PC-3 (cell line): ENCODE measurements at regions of chr4 and their contacts with region 1.

Region 1: GRCh38 chr4:174352061-174352819 is 68.5 kb downstream of the CEP44 start:
- DNase-seq: no peak
- ATAC-seq: no peak
- H3K4me3 ChIP-seq: no peak overlapping the region
- H3K27ac ChIP-seq: no peak overlapping the region
- H3K4me1 ChIP-seq: no peaks in the 10 kb centered on the region
- H3K27me3 ChIP-seq: no peaks in the 10 kb centered on the region
- CTCF ChIP-seq: no peak

Region 2: GRCh38 chr4:174209341-174209740 is 142.9 kb before region 1 on chr4:
- CTCF ChIA-PET with region 1: no interaction called
- POLR2A ChIA-PET with region 1: no interaction called
- intact Hi-C with region 1: no loop called
- DNase-seq: no peak
- ATAC-seq: no peak
- H3K4me3 ChIP-seq: no peak overlapping the region
- H3K27ac ChIP-seq: no peak overlapping the region
- H3K4me1 ChIP-seq: peaks cover 11% of the 10 kb centered on the region
- H3K27me3 ChIP-seq: no peaks in the 10 kb centered on the region
- CTCF ChIP-seq: no peak

Region 3: DNA sequence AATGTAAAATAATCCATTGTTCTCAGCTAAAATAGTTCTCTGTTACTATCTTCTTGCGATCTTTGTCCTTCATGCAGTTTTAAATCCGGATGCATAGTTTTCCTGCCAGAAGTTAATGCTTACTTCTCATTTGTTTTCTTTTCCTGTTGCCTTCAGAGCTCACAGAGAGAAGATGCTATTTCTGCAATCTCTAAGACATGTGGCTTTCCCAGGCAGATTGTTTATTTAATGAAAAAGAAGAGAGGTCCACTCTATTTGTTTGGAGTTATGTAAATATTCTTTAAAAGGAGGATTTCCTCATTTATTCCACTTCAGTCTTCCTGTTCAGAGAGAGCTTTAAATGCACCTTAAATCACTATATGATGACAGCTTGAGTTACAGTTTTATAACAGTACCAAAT is 209.3 kb after region 1 on chr4:
- CTCF ChIA-PET with region 1: no interaction called
- POLR2A ChIA-PET with region 1: interaction called, 13 read pairs
- intact Hi-C with region 1: no loop called
- DNase-seq: peak; percentile 17
- ATAC-seq: peak; percentile 78
- H3K4me3 ChIP-seq: no peak overlapping the region
- H3K27ac ChIP-seq: no peak overlapping the region
- H3K4me1 ChIP-seq: no peaks in the 10 kb centered on the region; the same call in 1 of the 2 replicates
- H3K27me3 ChIP-seq: no peaks in the 10 kb centered on the region
- CTCF ChIP-seq: no peak